ENCODE measurements at regions of chr10 and their contacts with region 1.

Region 1: DNA sequence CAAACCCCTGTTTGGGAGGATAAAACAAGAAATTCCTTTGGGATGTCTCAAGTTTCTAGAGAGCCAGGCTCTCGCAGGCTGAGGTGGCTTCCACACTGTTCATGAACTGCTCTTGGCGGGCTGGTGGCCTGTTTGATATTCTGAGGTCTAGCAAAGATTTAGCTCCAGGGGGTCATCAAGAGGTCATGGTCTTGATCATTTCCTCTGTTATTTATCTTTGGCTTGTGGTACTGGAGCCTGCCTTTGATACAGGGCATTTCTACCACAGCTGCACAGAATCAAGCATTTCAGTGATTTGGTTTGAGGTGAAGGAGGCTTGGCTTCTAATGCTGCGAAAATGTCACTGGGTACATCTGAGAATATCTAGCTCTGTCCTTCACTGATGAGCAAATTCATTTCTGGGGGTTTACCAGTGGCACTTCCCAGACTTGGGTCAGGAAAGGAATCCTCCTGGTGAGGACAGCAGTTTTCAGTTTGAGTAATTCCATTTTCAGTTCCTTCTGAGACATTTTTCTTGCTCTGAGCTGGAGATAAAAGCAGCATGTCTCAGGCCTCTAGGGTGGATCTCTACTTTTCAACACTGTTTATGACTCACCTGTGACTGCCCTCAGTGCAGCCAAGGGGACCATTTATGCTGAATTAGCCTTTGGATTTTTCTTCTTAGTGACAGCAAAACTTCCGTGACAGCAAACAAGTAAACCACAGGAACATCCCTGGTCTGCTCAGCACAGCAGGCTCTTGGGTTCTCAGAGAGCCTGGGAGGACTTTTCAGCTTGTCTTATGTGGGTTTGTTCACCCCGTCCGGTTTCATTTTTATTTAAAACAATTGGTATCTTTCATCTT is 312.0 kb downstream of the RNLS start:
- DNase-seq: peak; percentile 67
- H3K4me3 Mint-ChIP-seq: no peak overlapping the region
- H3K27ac Mint-ChIP-seq: peak overlapping the region; percentile 74
- H3K4me1 Mint-ChIP-seq: peaks cover 60% of the 10 kb centered on the region
- H3K27me3 Mint-ChIP-seq: peaks cover 22% of the 10 kb centered on the region

Region 2: DNA sequence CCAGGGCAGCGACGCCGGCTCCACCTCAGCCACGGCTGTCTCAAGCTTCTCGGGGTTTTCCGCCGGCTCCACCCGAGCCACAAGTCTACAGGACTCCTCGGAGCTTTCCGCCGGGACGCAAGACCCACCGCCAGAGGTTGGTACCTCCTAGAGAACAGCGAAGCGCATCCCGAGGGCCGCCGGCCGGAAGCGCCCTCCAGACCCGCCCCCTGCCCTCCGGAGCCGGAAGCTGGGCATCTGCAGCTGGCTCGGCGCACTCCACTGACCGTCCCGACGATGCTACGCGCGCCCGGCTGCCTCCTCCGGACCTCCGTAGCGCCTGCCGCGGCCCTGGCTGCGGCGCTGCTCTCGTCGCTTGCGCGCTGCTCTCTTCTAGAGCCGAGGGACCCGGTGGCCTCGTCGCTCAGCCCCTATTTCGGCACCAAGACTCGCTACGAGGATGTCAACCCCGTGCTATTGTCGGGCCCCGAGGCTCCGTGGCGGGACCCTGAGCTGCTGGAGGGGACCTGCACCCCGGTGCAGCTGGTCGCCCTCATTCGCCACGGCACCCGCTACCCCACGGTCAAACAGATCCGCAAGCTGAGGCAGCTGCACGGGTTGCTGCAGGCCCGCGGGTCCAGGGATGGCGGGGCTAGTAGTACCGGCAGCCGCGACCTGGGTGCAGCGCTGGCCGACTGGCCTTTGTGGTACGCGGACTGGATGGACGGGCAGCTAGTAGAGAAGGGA is 766.3 kb before region 1 on chr10 and contains the start of gene MINPP1:
- intact Hi-C with region 1: loop called (anchors 1 kb)
- DNase-seq: peak; percentile 60
- H3K4me3 Mint-ChIP-seq: peak within 1 kb of the TSS; percentile 83
- H3K27ac Mint-ChIP-seq: peak within 1 kb of the TSS; percentile 80
- H3K4me1 Mint-ChIP-seq: peaks cover 27% of the 10 kb centered on the region
- H3K27me3 Mint-ChIP-seq: peaks cover 15% of the 10 kb centered on the region
- total RNA-seq, gene MINPP1: 13.4 and 14.1 TPM in 2 replicates

Region 3: DNA sequence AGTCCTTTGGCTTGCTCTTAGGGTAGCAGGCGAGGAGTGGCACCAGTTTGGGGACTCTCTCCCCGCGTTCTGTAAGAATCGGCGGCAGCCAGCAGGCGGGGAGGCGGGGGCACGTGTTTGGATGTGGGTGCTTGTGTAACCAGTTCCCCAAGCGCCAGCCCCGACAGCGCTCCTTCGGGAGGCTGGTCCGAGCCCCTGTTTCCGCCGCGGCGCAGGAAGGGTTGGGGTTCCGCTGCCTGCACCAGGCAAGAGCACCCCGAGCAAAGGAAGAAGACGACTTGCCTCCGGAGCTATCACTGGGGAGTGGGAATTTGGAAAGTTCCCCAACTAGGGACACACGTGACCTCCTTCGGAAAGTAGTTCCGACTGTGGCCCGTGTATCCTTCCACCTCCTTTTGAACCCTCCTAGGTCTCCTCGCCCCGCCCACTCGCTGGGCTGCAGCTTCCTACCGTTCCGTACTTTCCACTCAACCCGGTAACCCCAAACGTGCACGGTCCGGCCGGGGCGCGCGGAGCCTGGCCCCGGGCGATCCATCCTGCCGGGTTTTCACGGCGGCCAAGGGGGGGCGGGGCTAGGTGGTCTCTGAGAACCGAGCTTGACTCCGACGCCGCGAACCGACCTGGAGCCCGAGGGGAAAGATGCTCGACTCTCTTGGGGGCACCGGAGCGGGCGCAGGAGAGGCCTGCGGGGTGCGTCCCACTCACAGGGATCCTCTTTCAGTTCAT is 409.0 kb before region 1 on chr10:
- intact Hi-C with region 1: loop called (anchors 1 kb)
- DNase-seq: peak; percentile 93
- H3K4me3 Mint-ChIP-seq: peak overlapping the region; percentile 98
- H3K27ac Mint-ChIP-seq: peak overlapping the region; percentile 96
- H3K4me1 Mint-ChIP-seq: peaks cover 28% of the 10 kb centered on the region
- H3K27me3 Mint-ChIP-seq: no peaks in the 10 kb centered on the region

Region 4: GRCh38 chr10:88091490-88092105 is 179.5 kb before region 1 on chr10:
- intact Hi-C with region 1: loop called (anchors 1 kb)
- DNase-seq: peak; percentile 71
- H3K4me3 Mint-ChIP-seq: no peak overlapping the region
- H3K27ac Mint-ChIP-seq: no peak overlapping the region
- H3K4me1 Mint-ChIP-seq: peaks cover 34% of the 10 kb centered on the region
- H3K27me3 Mint-ChIP-seq: peaks cover 56% of the 10 kb centered on the region

Region 5: GRCh38 chr10:88152720-88153119 is 118.4 kb before region 1 on chr10:
- intact Hi-C with region 1: loop called (anchors 1 kb)
- DNase-seq: peak; percentile 39
- H3K4me3 Mint-ChIP-seq: no peak overlapping the region
- H3K27ac Mint-ChIP-seq: peak overlapping the region; percentile 89
- H3K4me1 Mint-ChIP-seq: peaks cover 40% of the 10 kb centered on the region
- H3K27me3 Mint-ChIP-seq: peaks cover 7% of the 10 kb centered on the region

Region 6: GRCh38 chr10:88243836-88244730 is 27.0 kb before region 1 on chr10:
- intact Hi-C with region 1: no loop called
- DNase-seq: no peak
- H3K4me3 Mint-ChIP-seq: no peak overlapping the region
- H3K27ac Mint-ChIP-seq: no peak overlapping the region
- H3K4me1 Mint-ChIP-seq: peaks cover 20% of the 10 kb centered on the region
- H3K27me3 Mint-ChIP-seq: peaks cover 33% of the 10 kb centered on the region

Region 7: GRCh38 chr10:88293073-88293472 is 22.0 kb after region 1 on chr10:
- intact Hi-C with region 1: loop called (anchors 2 kb)
- DNase-seq: no peak
- H3K4me3 Mint-ChIP-seq: no peak overlapping the region
- H3K27ac Mint-ChIP-seq: no peak overlapping the region
- H3K4me1 Mint-ChIP-seq: peaks cover 32% of the 10 kb centered on the region
- H3K27me3 Mint-ChIP-seq: peaks cover 5% of the 10 kb centered on the region

Region 8: GRCh38 chr10:88553116-88553752 is 282.1 kb after region 1 on chr10:
- intact Hi-C with region 1: no loop called
- DNase-seq: peak; percentile 16
- H3K4me3 Mint-ChIP-seq: no peak overlapping the region
- H3K27ac Mint-ChIP-seq: no peak overlapping the region
- H3K4me1 Mint-ChIP-seq: peaks cover 8% of the 10 kb centered on the region
- H3K27me3 Mint-ChIP-seq: peaks cover 6% of the 10 kb centered on the region

Region 9: DNA sequence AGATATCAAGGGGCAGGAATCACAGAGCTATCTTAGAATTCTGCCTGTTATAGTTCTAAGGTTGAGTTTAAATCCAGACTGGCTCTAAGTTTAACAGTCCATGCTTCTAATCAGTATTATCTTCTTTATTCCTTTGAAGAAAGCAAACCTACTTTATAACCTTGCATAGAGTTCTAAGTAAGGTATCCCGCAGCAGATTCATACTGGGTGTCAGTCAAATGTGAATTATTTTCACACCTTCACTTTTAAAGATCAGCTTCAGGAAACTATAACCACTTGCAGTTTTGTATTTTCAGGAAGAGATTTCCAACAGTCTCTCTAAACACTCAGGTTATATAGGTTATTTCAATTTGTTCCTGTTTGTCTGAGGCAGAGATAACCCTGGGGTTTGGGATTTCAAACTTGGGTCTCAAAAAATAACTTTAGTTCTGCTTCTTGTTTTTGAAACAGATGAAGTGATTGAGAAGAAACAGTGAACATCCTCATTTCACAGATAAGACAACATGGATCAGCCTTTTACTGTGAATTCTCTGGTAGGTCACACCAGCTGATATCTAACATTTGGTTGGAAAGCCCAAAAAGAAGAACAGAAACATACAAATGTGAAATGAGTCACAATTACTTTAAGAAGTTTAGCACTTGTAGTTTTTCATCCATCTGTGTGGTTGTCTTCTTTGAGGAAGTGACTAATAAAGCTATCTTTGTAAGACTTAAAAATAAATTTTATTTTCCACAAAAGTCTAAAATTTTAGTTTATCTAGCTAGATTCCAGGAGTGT is 630.3 kb after region 1 on chr10:
- intact Hi-C with region 1: loop called (anchors 5 kb)
- DNase-seq: no peak
- H3K4me3 Mint-ChIP-seq: peak overlapping the region; percentile 51
- H3K27ac Mint-ChIP-seq: peak overlapping the region; percentile 87
- H3K4me1 Mint-ChIP-seq: peaks cover 60% of the 10 kb centered on the region
- H3K27me3 Mint-ChIP-seq: no peaks in the 10 kb centered on the region

Measured in activated T-helper 2 cell treated with anti-CD3 and anti-CD28 coated beads, Interferon-gamma antibody, Interleukin-2, Interleukin-4, amounts not matched to agents 10 μg/mL and 5 μg/mL and 100 μg/mL, durations not matched to agents 14 hours and 24 hours and 36 hours (primary cell).